ENCODE measurements at regions of chr2 and their contacts with region 1.

Region 1: GRCh38 chr2:205885492-205886099 is 200.4 kb downstream of the INO80D start:
- DNase-seq: peak; percentile 36
- ATAC-seq: no peak
- H3K4me3 Mint-ChIP-seq: no peak overlapping the region
- H3K27ac Mint-ChIP-seq: no peak overlapping the region
- H3K4me1 Mint-ChIP-seq: no peaks in the 10 kb centered on the region
- H3K27me3 Mint-ChIP-seq: peaks cover 20% of the 10 kb centered on the region
- CTCF ChIP-seq: no peak

Region 2: DNA sequence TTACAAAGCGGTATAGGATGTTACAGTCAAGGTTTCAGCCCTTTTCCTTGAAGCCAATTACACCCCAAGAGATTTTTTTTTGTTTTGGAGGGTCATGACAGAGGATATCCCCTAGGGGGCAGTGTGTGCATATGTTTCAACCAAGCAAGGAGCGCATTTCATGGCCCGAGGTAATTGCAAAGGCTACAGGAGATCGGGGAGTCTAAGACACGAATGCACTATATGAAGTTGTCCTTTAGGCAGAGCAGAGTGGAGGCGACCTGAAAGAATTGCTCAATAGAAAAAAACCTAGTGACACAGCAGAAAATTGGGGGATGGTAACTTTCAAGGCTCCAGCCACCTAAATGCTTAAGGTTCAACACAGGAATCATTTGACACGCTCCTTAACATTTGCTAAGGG is 1560.1 kb before region 1 on chr2:
- CTCF ChIA-PET with region 1: interaction called, 3 read pairs
- POLR2A ChIA-PET with region 1: no interaction called
- intact Hi-C with region 1: loop called (anchors 1 kb)
- DNase-seq: no peak
- ATAC-seq: peak; percentile 45
- H3K4me3 Mint-ChIP-seq: no peak overlapping the region
- H3K27ac Mint-ChIP-seq: no peak overlapping the region
- H3K4me1 Mint-ChIP-seq: peaks cover 2% of the 10 kb centered on the region
- H3K27me3 Mint-ChIP-seq: peaks cover 2% of the 10 kb centered on the region
- CTCF ChIP-seq: no peak

Region 3: DNA sequence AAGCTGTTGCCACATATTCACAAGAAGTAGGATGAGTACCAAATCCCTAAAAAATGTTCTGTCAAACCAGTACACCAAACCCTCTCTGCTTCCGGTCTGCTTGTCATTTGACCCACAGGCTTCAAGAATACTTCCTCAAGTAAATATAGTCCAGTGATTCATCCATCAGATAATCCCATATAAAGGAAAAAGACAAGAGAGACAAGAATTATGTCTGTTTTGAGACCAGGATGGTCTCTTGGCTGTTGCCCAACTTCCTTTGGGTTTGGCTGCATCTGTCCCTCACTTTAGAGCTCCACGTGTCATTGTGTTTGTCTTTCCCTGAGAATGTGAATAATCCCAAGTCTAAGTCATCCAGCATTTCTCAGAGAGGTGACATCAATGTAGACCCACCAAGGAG is 294.8 kb before region 1 on chr2:
- CTCF ChIA-PET with region 1: no interaction called
- POLR2A ChIA-PET with region 1: no interaction called
- intact Hi-C with region 1: loop called (anchors 10 kb)
- DNase-seq: no peak
- ATAC-seq: no peak
- H3K4me3 Mint-ChIP-seq: no peak overlapping the region
- H3K27ac Mint-ChIP-seq: no peak overlapping the region
- H3K4me1 Mint-ChIP-seq: no peaks in the 10 kb centered on the region
- H3K27me3 Mint-ChIP-seq: peaks cover 7% of the 10 kb centered on the region
- CTCF ChIP-seq: no peak